ENCODE measurements at regions of chr22 and their contacts with region 1.

Region 1: DNA sequence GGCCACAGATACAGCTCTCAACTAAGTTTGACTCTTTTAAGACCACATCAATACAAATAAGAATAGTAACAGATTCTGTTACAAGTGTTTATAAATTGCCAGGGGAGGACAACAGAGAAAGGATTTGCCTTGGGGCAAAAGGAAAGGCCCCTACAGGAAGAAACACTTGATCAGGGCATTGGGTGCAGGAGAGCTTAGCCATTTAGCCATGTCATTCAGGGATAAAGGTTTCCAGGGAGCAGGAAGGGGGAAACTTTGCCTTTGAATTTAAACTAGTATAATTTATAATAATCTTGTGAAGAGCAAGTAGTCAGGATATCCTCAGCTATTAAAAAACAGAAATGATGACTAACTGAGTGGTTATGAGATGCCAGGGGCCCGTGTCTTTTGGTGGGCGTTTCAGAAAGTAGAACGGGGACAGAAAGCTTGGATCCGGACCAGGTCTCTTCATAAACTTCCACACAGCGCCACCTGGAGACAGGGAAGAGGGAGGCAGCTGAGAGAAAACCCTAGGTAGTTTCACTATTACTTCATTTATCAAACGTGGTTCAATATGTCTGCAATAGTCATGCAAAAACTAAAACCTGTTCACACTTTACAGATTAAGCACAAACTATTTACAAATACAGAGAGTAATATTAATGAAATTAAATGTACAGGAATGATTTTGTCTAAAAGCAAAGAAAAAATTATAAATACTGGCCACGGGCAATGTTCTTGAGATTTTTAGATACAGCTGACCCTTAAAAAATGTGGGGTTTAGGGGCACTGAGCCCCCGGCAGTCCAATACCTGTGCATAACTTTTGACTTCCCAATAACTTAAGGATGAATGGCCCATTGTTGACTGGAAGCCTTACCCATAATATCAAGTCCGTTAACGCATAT is 11.0 kb upstream of the SLC5A4 start:
- DNase-seq: peak; percentile 66
- H3K4me3 ChIP-seq: peak overlapping the region in 1 of 4 donors; percentile 12
- H3K27ac ChIP-seq: peak overlapping the region in 1 of 4 donors; percentile 44
- H3K4me1 ChIP-seq: peaks cover 0 to 8% (median 0%) of the 10 kb centered on the region in 4 donors
- H3K27me3 ChIP-seq: no peaks in the 10 kb centered on the region
- CTCF ChIP-seq: peak; percentile 72 to 81 (median 76)
- EP300 ChIP-seq: no peak
- POLR2A ChIP-seq: no peak

Region 2: GRCh38 chr22:31790240-31790639 is 475.9 kb before region 1 on chr22:
- in situ Hi-C with region 1: loop called in 1 of 4 experiments (anchors 25 kb)
- intact Hi-C with region 1: no loop called
- DNase-seq: no peak
- H3K4me3 ChIP-seq: no peak overlapping the region
- H3K27ac ChIP-seq: no peak overlapping the region
- H3K4me1 ChIP-seq: no peaks in the 10 kb centered on the region
- H3K27me3 ChIP-seq: no peaks in the 10 kb centered on the region
- CTCF ChIP-seq: no peak
- EP300 ChIP-seq: no peak
- POLR2A ChIP-seq: no peak

Region 3: GRCh38 chr22:32103658-32104315 is 162.3 kb before region 1 on chr22:
- in situ Hi-C with region 1: loop called in 2 of 4 experiments (anchors 10 kb)
- intact Hi-C with region 1: no loop called
- DNase-seq: no peak
- H3K4me3 ChIP-seq: no peak overlapping the region
- H3K27ac ChIP-seq: no peak overlapping the region
- H3K4me1 ChIP-seq: no peaks in the 10 kb centered on the region
- H3K27me3 ChIP-seq: no peaks in the 10 kb centered on the region
- CTCF ChIP-seq: peak in 1 of 5 experiments; percentile 15
- EP300 ChIP-seq: no peak
- POLR2A ChIP-seq: no peak

Region 4: DNA sequence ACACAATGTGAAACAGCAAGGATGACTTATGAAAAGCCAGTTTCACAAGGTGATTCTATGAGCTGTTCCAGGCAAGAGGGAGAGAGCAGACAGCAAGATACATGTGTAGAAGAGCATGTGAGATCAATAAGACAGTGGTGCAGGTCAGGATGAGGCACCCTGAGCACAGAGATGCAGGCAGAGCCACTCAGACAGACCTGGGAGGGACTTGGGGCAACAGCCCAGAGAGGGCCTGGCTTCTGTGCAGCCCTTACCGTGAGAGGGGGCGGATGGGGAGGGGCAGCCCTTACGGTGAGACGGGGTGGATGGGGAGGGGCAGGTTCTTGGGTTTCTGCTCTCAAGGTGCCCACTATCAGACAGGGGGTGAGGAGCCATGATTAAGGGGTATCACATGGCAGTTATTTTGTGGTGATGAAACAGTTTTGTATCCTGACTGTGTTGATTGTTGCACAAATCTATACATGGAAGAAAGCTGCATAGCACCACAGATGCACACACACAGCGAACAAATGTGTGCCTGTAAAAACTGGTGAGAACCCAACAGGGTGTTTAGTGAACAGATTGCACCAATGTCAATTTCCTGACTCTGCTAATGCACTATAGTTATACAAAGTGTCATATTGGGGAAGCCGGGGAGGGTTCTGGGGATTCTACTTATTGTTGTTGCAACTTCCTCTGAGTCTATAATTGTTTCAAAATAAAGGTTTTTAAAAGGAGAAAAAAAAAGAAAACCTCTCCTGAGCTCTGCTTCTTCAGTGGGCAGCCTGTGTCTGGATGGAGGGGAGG is 101.9 kb before region 1 on chr22:
- in situ Hi-C with region 1: no loop called
- intact Hi-C with region 1: no loop called
- DNase-seq: no peak
- H3K4me3 ChIP-seq: no peak overlapping the region
- H3K27ac ChIP-seq: no peak overlapping the region
- H3K4me1 ChIP-seq: no peaks in the 10 kb centered on the region
- H3K27me3 ChIP-seq: peaks cover 12% of the 10 kb centered on the region
- CTCF ChIP-seq: no peak
- EP300 ChIP-seq: no peak
- POLR2A ChIP-seq: no peak

Region 5: GRCh38 chr22:32341122-32341740 is 75.1 kb after region 1 on chr22:
- in situ Hi-C with region 1: no loop called
- intact Hi-C with region 1: no loop called
- DNase-seq: no peak
- H3K4me3 ChIP-seq: no peak overlapping the region
- H3K27ac ChIP-seq: no peak overlapping the region
- H3K4me1 ChIP-seq: no peaks in the 10 kb centered on the region
- H3K27me3 ChIP-seq: peaks cover 49% of the 10 kb centered on the region
- CTCF ChIP-seq: no peak
- EP300 ChIP-seq: no peak
- POLR2A ChIP-seq: no peak

Region 6: GRCh38 chr22:32539631-32540421 is 273.7 kb after region 1 on chr22:
- in situ Hi-C with region 1: no loop called
- intact Hi-C with region 1: no loop called
- DNase-seq: peak; percentile 33
- H3K4me3 ChIP-seq: no peak overlapping the region
- H3K27ac ChIP-seq: peak overlapping the region in 3 of 4 donors; percentile 27 to 46 (median 31)
- H3K4me1 ChIP-seq: peaks cover 0 to 7% (median 2%) of the 10 kb centered on the region in 4 donors
- H3K27me3 ChIP-seq: no peaks in the 10 kb centered on the region
- CTCF ChIP-seq: no peak
- EP300 ChIP-seq: no peak
- POLR2A ChIP-seq: no peak

Region 7: DNA sequence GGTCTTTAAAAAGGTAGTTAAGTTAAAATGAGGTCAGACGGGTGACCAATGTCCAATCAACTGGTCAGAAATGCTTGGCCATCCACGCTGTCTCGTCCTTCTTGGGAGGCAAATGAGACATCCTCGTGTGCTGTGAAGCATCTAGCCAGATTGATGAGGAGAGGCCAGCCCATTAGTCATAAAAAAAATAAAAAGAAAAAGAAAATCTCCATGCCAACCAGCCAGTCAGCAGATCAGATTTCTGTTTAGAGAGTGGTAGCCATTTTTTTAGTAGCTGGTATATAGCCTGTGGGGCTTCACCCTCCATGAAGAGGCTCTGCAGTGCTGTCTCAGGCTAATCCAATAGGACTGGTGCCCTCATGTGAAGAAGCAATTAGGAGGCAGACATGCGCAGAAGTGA is 1135.2 kb after region 1 on chr22:
- in situ Hi-C with region 1: no loop called
- intact Hi-C with region 1: no loop called
- DNase-seq: no peak
- H3K4me3 ChIP-seq: no peak overlapping the region
- H3K27ac ChIP-seq: no peak overlapping the region
- H3K4me1 ChIP-seq: peaks cover 0 to 7% (median 0%) of the 10 kb centered on the region in 4 donors
- H3K27me3 ChIP-seq: no peaks in the 10 kb centered on the region
- CTCF ChIP-seq: no peak
- EP300 ChIP-seq: no peak
- POLR2A ChIP-seq: no peak

Measured in transverse colon (tissue), 4 donors.